Activated CD4-positive, alpha-beta T cell treated with anti-CD3 and anti-CD28 coated beads for 36 hours (primary cell): ENCODE measurements at regions of chr11 and their contacts with region 1.

Region 1: DNA sequence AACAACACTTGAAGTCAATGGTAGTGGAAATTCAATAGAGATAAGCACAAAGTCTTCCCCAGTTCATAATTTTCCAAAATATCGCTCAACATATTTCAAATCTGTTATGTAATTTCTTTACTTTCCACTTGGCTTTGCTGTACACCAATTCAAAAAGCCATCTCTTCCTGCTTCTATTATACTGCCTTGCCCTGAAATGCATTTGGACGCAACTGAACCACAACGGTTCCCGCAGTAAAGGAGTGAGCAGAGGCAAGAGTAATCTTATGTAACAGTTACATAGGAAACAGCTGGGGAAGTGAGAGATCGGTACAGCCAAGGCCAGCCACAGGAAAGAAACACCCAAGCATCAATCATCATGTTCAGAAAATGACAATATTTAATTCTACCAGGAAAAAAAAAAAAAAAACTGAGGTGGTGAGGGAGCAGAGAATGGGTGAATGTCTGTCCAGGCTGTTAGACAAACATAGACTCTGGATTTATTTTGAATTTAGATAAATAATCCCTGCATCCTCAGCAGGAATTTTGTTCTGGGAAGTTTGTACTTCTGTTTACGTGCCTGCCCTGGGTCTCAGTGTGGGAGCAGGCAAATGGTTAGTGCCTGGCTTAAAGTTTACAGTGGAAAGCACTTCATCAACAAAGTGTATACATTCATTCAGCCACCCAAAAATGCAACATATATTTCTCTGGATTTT is 392.2 kb downstream of the ETS1 start:
- DNase-seq: peak; percentile 63
- ATAC-seq: peak; percentile 73
- H3K4me3 Mint-ChIP-seq: peak overlapping the region; percentile 10
- H3K27ac Mint-ChIP-seq: no peak overlapping the region
- H3K4me1 Mint-ChIP-seq: peaks cover 39% of the 10 kb centered on the region
- H3K27me3 Mint-ChIP-seq: no peaks in the 10 kb centered on the region

Region 2: DNA sequence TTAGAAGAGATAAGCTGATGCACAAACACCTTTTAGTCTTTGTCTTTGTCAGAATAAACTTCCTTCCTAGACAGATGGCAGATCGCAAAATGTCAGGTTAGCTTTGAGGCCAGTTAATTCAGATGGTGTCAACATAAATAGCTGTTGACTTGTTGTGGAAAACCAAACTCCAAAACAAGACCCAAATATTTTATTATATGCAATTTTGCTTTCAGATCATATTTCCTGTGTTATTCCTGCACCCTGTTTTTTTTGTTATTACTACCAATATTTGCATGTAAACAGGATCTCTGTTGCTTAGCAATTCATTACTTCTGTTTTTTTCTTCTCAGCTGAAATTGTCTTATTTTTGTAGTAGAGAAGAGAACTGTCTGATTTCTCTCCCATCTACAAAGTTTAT is 76.2 kb after region 1 on chr11:
- CTCF ChIA-PET with region 1: interaction called, 3 read pairs
- POLR2A ChIA-PET with region 1: no interaction called
- intact Hi-C with region 1: loop called in 1 of 2 experiments (anchors 5 kb)
- DNase-seq: no peak
- ATAC-seq: no peak
- H3K4me3 Mint-ChIP-seq: no peak overlapping the region
- H3K27ac Mint-ChIP-seq: no peak overlapping the region
- H3K4me1 Mint-ChIP-seq: peaks cover 26% of the 10 kb centered on the region
- H3K27me3 Mint-ChIP-seq: no peaks in the 10 kb centered on the region